Endothelial cell of umbilical vein (primary cell): ENCODE measurements at regions of chr18 and their contacts with region 1.

Region 1: GRCh38 chr18:5456577-5457463 is 87.0 kb downstream of the EPB41L3 start:
- DNase-seq: peak; percentile 79
- H3K4me3 ChIP-seq: peak overlapping the region in 1 of 3 experiments; percentile 46
- H3K27ac ChIP-seq: peak overlapping the region; percentile 98
- H3K4me1 ChIP-seq: peaks cover 54% of the 10 kb centered on the region
- H3K27me3 ChIP-seq: no peaks in the 10 kb centered on the region
- CTCF ChIP-seq: peak; percentile 29 to 37
- POLR2A ChIP-seq: no peak

Region 2: GRCh38 chr18:5237723-5238370 is 219.0 kb before region 1 on chr18:
- CTCF ChIA-PET with region 1: interaction called, 3 read pairs
- POLR2A ChIA-PET with region 1: no interaction called
- dilution Hi-C with region 1: no loop called
- intact Hi-C with region 1: loop called (anchors 2 kb)
- DNase-seq: peak; percentile 91
- H3K4me3 ChIP-seq: peak overlapping the region; percentile 66 to 80 (median 72)
- H3K27ac ChIP-seq: peak overlapping the region; percentile 73
- H3K4me1 ChIP-seq: peaks cover 20% of the 10 kb centered on the region
- H3K27me3 ChIP-seq: peaks cover 9 to 17% of the 10 kb centered on the region in 2 experiments
- CTCF ChIP-seq: peak in 1 of 2 donors; percentile 61
- POLR2A ChIP-seq: peak; percentile 81

Region 3: GRCh38 chr18:5424903-5425664 is 31.7 kb before region 1 on chr18:
- CTCF ChIA-PET with region 1: interaction called, 12 read pairs
- POLR2A ChIA-PET with region 1: no interaction called
- dilution Hi-C with region 1: no loop called
- intact Hi-C with region 1: loop called (anchors 2 kb)
- DNase-seq: peak; percentile 67
- H3K4me3 ChIP-seq: no peak overlapping the region
- H3K27ac ChIP-seq: no peak overlapping the region
- H3K4me1 ChIP-seq: no peaks in the 10 kb centered on the region
- H3K27me3 ChIP-seq: no peaks in the 10 kb centered on the region
- CTCF ChIP-seq: peak; percentile 22 to 53
- POLR2A ChIP-seq: no peak

Region 4: DNA sequence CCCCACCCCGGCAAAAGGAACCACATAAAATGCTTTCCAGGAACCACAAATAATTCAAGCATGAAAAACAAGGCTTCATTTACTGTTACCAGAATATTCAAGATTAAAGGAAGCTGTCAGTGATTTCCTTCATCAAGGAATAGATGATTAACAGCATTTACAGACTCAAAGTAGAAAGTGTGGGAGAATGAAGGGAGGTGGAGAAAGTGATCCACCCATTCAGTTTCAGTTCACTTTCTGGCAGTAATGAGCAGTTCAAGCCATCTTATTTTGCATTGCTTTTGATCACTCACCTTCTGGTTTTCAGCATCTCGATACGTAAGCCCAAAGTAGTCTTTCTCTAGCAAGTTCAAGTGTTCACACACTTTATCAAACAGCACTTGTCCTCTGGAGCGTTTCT is 12.0 kb before region 1 on chr18:
- CTCF ChIA-PET with region 1: interaction called, 14 read pairs
- POLR2A ChIA-PET with region 1: no interaction called
- dilution Hi-C with region 1: no loop called
- intact Hi-C with region 1: no loop called
- DNase-seq: no peak
- H3K4me3 ChIP-seq: no peak overlapping the region
- H3K27ac ChIP-seq: no peak overlapping the region
- H3K4me1 ChIP-seq: peaks cover 3% of the 10 kb centered on the region
- H3K27me3 ChIP-seq: no peaks in the 10 kb centered on the region
- CTCF ChIP-seq: no peak
- POLR2A ChIP-seq: no peak

Region 5: GRCh38 chr18:5515011-5515784 is 58.4 kb after region 1 on chr18:
- CTCF ChIA-PET with region 1: interaction called, 16 read pairs
- POLR2A ChIA-PET with region 1: no interaction called
- dilution Hi-C with region 1: no loop called
- intact Hi-C with region 1: loop called (anchors 1 kb)
- DNase-seq: no peak
- H3K4me3 ChIP-seq: no peak overlapping the region
- H3K27ac ChIP-seq: no peak overlapping the region
- H3K4me1 ChIP-seq: peaks cover 49% of the 10 kb centered on the region
- H3K27me3 ChIP-seq: no peaks in the 10 kb centered on the region
- CTCF ChIP-seq: no peak
- POLR2A ChIP-seq: no peak

Region 6: GRCh38 chr18:5582849-5583681 is 126.2 kb after region 1 on chr18:
- CTCF ChIA-PET with region 1: interaction called, 4 read pairs
- POLR2A ChIA-PET with region 1: no interaction called
- dilution Hi-C with region 1: no loop called
- intact Hi-C with region 1: loop called (anchors 2 kb)
- DNase-seq: peak; percentile 90
- H3K4me3 ChIP-seq: no peak overlapping the region
- H3K27ac ChIP-seq: peak overlapping the region; percentile 79
- H3K4me1 ChIP-seq: peaks cover 31% of the 10 kb centered on the region
- H3K27me3 ChIP-seq: no peaks in the 10 kb centered on the region
- CTCF ChIP-seq: no peak
- POLR2A ChIP-seq: no peak